ENCODE measurements at regions of chr5 and their contacts with region 1.

Region 1: GRCh38 chr5:157219491-157220271 is 39.0 kb downstream of the ITK start:
- DNase-seq: peak; percentile 36
- H3K4me3 Mint-ChIP-seq: peak overlapping the region; percentile 19
- H3K27ac Mint-ChIP-seq: peak overlapping the region; percentile 90
- H3K4me1 Mint-ChIP-seq: peaks cover 93% of the 10 kb centered on the region
- H3K27me3 Mint-ChIP-seq: no peaks in the 10 kb centered on the region

Region 2: GRCh38 chr5:157088342-157088990 is 131.2 kb before region 1 on chr5:
- CTCF ChIA-PET with region 1: no interaction called
- POLR2A ChIA-PET with region 1: no interaction called
- DNase-seq: no peak
- H3K4me3 Mint-ChIP-seq: no peak overlapping the region
- H3K27ac Mint-ChIP-seq: no peak overlapping the region
- H3K4me1 Mint-ChIP-seq: no peaks in the 10 kb centered on the region
- H3K27me3 Mint-ChIP-seq: no peaks in the 10 kb centered on the region

Region 3: GRCh38 chr5:157172403-157172802 is 47.3 kb before region 1 on chr5:
- CTCF ChIA-PET with region 1: interaction called, 3 read pairs
- POLR2A ChIA-PET with region 1: interaction called, 32 read pairs
- DNase-seq: peak; percentile 85
- H3K4me3 Mint-ChIP-seq: peak overlapping the region; percentile 46
- H3K27ac Mint-ChIP-seq: peak overlapping the region; percentile 85
- H3K4me1 Mint-ChIP-seq: peaks cover 76% of the 10 kb centered on the region
- H3K27me3 Mint-ChIP-seq: no peaks in the 10 kb centered on the region

Region 4: DNA sequence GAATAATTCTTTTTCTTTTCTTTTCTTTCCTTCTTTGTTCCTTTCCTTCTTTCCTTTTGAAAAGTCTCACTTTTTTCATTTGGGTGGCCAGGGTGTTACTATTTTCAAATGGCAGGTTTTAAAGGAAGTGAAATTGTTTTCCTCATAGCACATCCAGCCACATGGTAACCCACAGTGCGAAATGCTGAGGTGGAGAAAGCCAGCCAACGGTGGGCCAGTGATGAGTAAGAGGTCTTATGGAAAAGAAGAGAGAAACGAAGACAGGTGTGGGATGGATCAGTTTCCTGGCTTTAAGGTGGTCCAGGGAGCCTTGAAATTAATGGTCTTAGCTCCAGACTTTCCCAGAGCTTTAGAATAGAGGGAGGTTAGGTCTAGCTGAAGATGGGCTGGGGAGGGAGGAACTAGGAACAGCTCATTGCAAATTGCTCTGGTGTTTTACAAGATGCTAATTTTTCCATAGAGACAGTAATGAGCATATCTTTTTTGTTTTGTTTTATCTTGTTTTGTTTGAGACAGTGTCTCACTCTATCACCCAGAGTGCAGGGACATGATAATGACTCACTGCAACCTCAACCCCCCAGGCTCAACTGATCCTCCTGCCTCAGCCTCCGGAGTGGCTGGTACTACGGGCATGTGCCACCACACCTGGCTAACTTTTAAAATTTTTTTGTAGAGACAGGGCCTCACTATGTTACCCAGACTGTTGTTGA is 21.2 kb before region 1 on chr5:
- CTCF ChIA-PET with region 1: interaction called, 8 read pairs
- POLR2A ChIA-PET with region 1: interaction called, 301 read pairs
- DNase-seq: peak; percentile 58
- H3K4me3 Mint-ChIP-seq: peak overlapping the region; percentile 55
- H3K27ac Mint-ChIP-seq: peak overlapping the region; percentile 89
- H3K4me1 Mint-ChIP-seq: peaks cover 94% of the 10 kb centered on the region
- H3K27me3 Mint-ChIP-seq: no peaks in the 10 kb centered on the region

Region 5: GRCh38 chr5:157253547-157253946 is 33.9 kb after region 1 on chr5:
- CTCF ChIA-PET with region 1: interaction called, 18 read pairs
- POLR2A ChIA-PET with region 1: interaction called, 111 read pairs
- DNase-seq: no peak
- H3K4me3 Mint-ChIP-seq: peak overlapping the region; percentile 19
- H3K27ac Mint-ChIP-seq: peak overlapping the region; percentile 96
- H3K4me1 Mint-ChIP-seq: peaks cover 92% of the 10 kb centered on the region
- H3K27me3 Mint-ChIP-seq: no peaks in the 10 kb centered on the region

Region 6: GRCh38 chr5:157431544-157432200 is 212.0 kb after region 1 on chr5:
- CTCF ChIA-PET with region 1: no interaction called
- POLR2A ChIA-PET with region 1: no interaction called
- DNase-seq: peak; percentile 26
- H3K4me3 Mint-ChIP-seq: no peak overlapping the region
- H3K27ac Mint-ChIP-seq: no peak overlapping the region
- H3K4me1 Mint-ChIP-seq: peaks cover 7% of the 10 kb centered on the region
- H3K27me3 Mint-ChIP-seq: peaks cover 13% of the 10 kb centered on the region

Measured in activated CD4-positive, alpha-beta memory T cell treated with anti-CD3 and anti-CD28 coated beads, Interleukin-2, amount 10 ng/mL, durations not matched to agents 7 days and 5 days (primary cell).